Activated CD4-positive, alpha-beta memory T cell treated with anti-CD3 and anti-CD28 coated beads for 36 hours (primary cell): ENCODE measurements at regions of chr19 and their contacts with region 1.

Region 1: DNA sequence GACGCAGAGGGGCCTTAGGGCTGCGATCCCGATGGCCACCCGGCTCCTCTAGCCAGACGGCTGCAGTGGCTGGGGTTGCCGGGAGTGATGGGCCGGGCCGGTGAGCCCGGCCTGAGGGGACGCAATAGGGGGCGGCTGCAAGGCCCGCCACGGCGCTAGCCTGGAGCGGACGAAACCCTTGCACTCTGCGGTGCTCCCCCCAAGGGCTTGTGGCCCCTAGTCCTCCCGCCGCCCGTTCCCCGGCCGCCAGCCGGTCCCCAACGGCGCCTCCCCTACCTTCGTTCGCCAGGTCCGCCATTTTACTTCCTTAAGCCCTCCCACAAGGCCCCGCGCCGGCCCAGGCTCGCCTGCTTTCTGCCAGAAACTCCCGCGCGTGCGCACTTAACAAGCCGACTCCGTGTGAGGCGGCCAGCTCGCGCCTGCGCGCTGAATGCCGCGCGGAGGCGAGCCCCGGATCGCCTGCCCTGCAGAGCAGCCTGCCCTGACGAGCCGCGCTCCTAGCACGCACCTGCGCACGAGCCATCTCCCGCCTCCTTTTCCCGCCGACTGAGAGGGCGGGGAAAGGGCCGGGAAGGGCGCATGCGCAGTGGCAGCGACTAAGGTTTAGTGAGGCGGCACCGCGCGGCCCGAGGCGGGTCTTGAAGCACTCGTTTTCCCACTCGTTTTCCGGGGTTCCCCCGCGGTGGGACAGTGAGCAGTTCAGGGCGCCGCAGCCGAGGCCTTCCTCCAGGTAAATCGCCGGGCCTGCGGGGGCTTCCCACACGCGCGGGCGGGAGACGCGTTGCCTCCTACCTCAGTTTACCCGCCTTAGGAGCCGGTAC is at the start of gene RANBP3:
- DNase-seq: peak; percentile 99
- H3K4me3 Mint-ChIP-seq: peak within 1 kb of the TSS; percentile 98
- H3K27ac Mint-ChIP-seq: peak within 1 kb of the TSS; percentile 92
- H3K4me1 Mint-ChIP-seq: peaks cover 57% of the 10 kb centered on the region
- H3K27me3 Mint-ChIP-seq: no peaks in the 10 kb centered on the region
- total RNA-seq, gene RANBP3: 78.1 to 81.3 TPM

Region 2: DNA sequence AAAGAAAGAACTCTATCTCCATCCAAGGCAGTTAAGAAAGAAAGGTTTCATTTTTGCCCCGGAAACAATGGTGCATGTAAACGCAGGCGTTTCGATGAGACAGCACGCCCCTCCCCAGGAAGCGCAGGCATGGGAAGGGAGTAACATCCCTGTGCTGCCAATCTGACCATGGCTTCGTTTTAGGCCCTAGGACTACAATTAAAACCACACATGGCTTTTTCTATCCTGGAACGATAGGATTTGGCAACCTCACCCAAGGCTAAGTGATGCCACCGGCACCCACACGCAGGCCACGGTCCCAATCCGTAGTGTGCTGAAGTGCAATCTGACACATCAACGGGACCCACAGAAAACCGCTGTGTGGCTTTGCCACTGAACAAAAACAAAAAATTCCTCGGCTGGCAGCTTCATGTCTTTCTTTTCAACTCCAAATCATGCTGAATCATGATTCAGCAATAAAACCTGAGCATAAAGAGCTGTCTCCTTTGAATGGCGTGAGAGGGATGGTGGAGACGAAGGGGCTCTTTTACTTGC is 24.2 kb before region 1 on chr19:
- CTCF ChIA-PET with region 1: interaction called, 3 read pairs
- POLR2A ChIA-PET with region 1: interaction called, 5 read pairs
- intact Hi-C with region 1: loop called (anchors 1 kb)
- DNase-seq: peak; percentile 64
- H3K4me3 Mint-ChIP-seq: peak overlapping the region; percentile 64
- H3K27ac Mint-ChIP-seq: peak overlapping the region; percentile 95
- H3K4me1 Mint-ChIP-seq: peaks cover 91% of the 10 kb centered on the region
- H3K27me3 Mint-ChIP-seq: no peaks in the 10 kb centered on the region

Region 3: DNA sequence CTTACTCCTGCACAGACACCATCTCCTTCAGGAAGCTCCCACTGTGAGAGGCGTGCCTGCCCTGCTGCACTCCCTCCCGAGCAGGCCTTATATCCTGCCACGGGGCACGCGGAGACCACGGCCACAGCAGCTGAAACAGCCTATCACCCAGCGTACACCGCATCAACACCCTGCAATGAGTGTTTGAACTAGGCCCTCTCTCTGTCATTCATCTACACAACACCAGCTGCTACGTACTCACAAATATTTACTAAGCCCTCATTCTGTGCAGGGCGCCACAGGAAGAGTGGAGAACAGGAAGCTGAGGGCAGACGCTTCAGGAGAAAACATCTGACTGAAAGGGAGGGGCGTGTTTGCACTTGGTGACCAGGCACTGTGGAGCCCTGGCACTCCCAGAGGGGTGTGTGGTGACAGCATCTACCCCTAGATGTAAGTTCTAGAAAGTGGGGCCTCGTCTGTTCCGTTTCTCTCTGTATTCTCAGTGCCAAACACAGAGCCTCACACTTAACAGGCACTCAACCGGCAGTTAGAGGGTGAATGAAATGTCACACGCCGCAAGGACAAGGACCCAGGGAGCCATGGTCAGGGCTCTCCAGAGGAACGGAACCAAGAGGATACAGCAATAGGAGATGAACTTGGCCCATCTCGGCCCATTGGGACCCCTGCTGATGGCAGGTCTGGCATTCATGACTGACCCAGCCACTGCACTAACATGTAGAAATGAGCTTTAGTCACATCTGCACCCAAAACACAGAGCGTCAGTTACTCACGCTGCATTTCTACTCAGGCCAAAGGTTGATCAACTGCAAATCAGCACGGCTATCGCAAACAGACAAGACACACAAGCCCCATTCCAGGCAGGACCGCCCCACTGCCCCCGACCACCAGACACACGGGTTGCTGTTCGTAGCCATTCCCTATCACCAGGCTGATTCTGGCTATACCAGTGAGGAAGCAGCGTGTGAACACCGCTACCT is 15.7 kb before region 1 on chr19:
- CTCF ChIA-PET with region 1: interaction called, 5 read pairs
- POLR2A ChIA-PET with region 1: interaction called, 4 read pairs
- intact Hi-C with region 1: loop called (anchors 1 kb)
- DNase-seq: peak; percentile 84
- H3K4me3 Mint-ChIP-seq: peak overlapping the region; percentile 43
- H3K27ac Mint-ChIP-seq: peak overlapping the region; percentile 98
- H3K4me1 Mint-ChIP-seq: peaks cover 92% of the 10 kb centered on the region
- H3K27me3 Mint-ChIP-seq: no peaks in the 10 kb centered on the region

Region 4: DNA sequence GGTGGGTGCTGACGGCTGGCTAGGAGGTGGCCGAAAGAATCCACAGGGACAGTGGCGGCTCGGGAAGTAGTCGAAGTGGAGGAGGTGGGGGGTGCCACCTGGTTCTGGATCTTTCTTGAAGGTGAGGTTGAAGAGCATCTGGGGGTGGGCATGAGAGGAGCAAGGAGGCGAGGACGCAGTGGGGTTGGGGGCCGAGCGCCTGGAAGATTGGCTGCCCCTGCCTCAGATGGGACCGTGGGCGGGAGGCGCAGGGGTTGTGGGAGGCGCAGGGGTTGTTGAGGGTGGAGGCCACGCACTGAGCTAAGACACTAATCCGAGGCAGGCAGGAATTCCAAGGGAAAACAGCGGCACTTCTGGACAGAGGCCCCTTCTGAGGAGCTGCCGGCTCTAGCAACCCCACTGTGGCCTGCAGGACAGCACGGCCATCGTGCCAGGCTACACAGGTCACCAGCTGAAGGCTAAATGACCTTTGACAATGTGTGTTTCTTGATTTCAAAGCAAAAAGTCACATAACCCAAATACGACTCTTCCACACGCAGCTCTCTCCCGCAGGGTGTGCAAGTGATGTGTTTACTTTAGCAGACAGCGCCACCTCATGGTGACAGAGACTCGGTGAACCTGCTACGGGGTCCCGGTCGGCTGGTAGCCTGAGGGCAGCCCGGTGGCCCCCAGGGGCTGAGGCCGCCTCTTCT is 44.0 kb after region 1 on chr19:
- CTCF ChIA-PET with region 1: interaction called, 27 read pairs
- POLR2A ChIA-PET with region 1: no interaction called
- intact Hi-C with region 1: no loop called
- DNase-seq: peak; percentile 86
- H3K4me3 Mint-ChIP-seq: no peak overlapping the region
- H3K27ac Mint-ChIP-seq: no peak overlapping the region
- H3K4me1 Mint-ChIP-seq: no peaks in the 10 kb centered on the region
- H3K27me3 Mint-ChIP-seq: peaks cover 8% of the 10 kb centered on the region

Region 5: GRCh38 chr19:6110360-6110977 is 132.5 kb after region 1 on chr19 and contains the start of gene RFX2:
- CTCF ChIA-PET with region 1: no interaction called
- POLR2A ChIA-PET with region 1: no interaction called
- intact Hi-C with region 1: loop called (anchors 1 kb)
- DNase-seq: peak; percentile 99
- H3K4me3 Mint-ChIP-seq: peak within 1 kb of the TSS; percentile 80
- H3K27ac Mint-ChIP-seq: peak within 1 kb of the TSS; percentile 74
- H3K4me1 Mint-ChIP-seq: peaks cover 19% of the 10 kb centered on the region
- H3K27me3 Mint-ChIP-seq: peaks cover 12% of the 10 kb centered on the region
- total RNA-seq, gene RFX2: 6.5 to 7.9 TPM

Region 6: GRCh38 chr19:6199240-6199983 is 221.4 kb after region 1 on chr19:
- CTCF ChIA-PET with region 1: no interaction called
- POLR2A ChIA-PET with region 1: no interaction called
- intact Hi-C with region 1: loop called (anchors 1 kb)
- DNase-seq: peak; percentile 100
- H3K4me3 Mint-ChIP-seq: peak overlapping the region; percentile 98
- H3K27ac Mint-ChIP-seq: peak overlapping the region; percentile 84
- H3K4me1 Mint-ChIP-seq: peaks cover 13% of the 10 kb centered on the region
- H3K27me3 Mint-ChIP-seq: peaks cover 1% of the 10 kb centered on the region